Activated naive CD4-positive, alpha-beta T cell treated with anti-CD3 and anti-CD28 coated beads for 36 hours (primary cell): ENCODE measurements at regions of chr1 and their contacts with region 1.

Region 1: GRCh38 chr1:52002038-52002917 is 11.8 kb upstream of the RAB3B start:
- DNase-seq: peak; percentile 68
- H3K4me3 Mint-ChIP-seq: no peak overlapping the region
- H3K27ac Mint-ChIP-seq: no peak overlapping the region
- H3K4me1 Mint-ChIP-seq: no peaks in the 10 kb centered on the region
- H3K27me3 Mint-ChIP-seq: peaks cover 15% of the 10 kb centered on the region

Region 2: GRCh38 chr1:51926171-51926812 is 76.0 kb before region 1 on chr1:
- CTCF ChIA-PET with region 1: interaction called, 3 read pairs
- intact Hi-C with region 1: loop called (anchors 2 kb)
- DNase-seq: peak; percentile 18
- H3K4me3 Mint-ChIP-seq: no peak overlapping the region
- H3K27ac Mint-ChIP-seq: no peak overlapping the region
- H3K4me1 Mint-ChIP-seq: no peaks in the 10 kb centered on the region
- H3K27me3 Mint-ChIP-seq: no peaks in the 10 kb centered on the region